Dorsolateral prefrontal cortex (tissue), 120 donors: ENCODE measurements at regions of chr4 and their contacts with region 1.

Region 1: GRCh38 chr4:39044364-39044955 is 12.3 kb upstream of the TMEM156 start:
- DNase-seq: peak; percentile 64 to 90 (median 84)
- H3K4me3 ChIP-seq: peak overlapping the region; percentile 33 to 94 (median 75)
- H3K27ac ChIP-seq: peak overlapping the region; percentile 53 to 98 (median 88)
- H3K27me3 ChIP-seq: no peaks in the 10 kb centered on the region
- CTCF ChIP-seq: peak in 10 of 56 donors; percentile 6 to 26 (median 14)

Region 2: DNA sequence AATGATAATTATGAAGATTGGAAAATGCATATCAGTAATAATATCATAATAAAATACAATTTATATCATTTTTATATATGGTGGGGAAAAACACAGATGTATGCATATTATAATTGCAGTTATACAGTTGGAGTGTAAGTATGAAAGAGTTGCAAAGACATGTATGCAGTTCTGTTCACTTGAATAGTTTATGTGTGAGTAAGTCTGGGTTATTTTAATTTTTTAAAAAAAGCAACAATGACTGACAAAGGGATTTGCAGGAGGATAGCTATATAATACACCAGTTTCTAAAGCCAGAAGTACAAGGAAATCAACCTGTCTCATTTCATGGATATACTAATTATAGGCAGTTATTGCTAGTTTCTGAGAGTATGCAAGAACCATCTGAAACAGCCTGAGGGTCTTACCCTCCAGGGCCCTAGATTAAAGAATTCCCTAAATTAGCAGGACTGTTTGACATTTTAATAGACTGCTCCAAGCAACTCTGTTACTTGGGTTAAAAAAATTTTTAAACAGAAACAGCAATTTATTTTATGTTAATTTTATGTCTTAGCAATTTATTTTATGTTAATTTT is 136.7 kb before region 1 on chr4:
- intact Hi-C with region 1: no loop called
- DNase-seq: no peak
- H3K4me3 ChIP-seq: no peak overlapping the region
- H3K27ac ChIP-seq: no peak overlapping the region
- H3K27me3 ChIP-seq: no peaks in the 10 kb centered on the region
- CTCF ChIP-seq: no peak

Region 3: GRCh38 chr4:38920186-38920585 is 124.3 kb before region 1 on chr4:
- intact Hi-C with region 1: loop called (anchors 5 to 10 kb)
- DNase-seq: no peak
- H3K4me3 ChIP-seq: no peak overlapping the region
- H3K27ac ChIP-seq: peak overlapping the region in 13 of 59 donors; percentile 0 to 90 (median 16)
- H3K27me3 ChIP-seq: no peaks in the 10 kb centered on the region
- CTCF ChIP-seq: no peak

Region 4: GRCh38 chr4:38925492-38926413 is 118.7 kb before region 1 on chr4:
- intact Hi-C with region 1: loop called (anchors 5 to 10 kb)
- DNase-seq: peak in 9 of 10 donors; percentile 43 to 72 (median 58)
- H3K4me3 ChIP-seq: peak overlapping the region in 2 of 59 donors; percentile 4 to 20
- H3K27ac ChIP-seq: peak overlapping the region; percentile 59 to 98 (median 91)
- H3K27me3 ChIP-seq: no peaks in the 10 kb centered on the region
- CTCF ChIP-seq: peak in 1 of 56 donors; percentile 6

Region 5: GRCh38 chr4:39061457-39061856 is 17.0 kb after region 1 on chr4:
- intact Hi-C with region 1: loop called in 1 of 2 experiments (anchors 2 kb)
- DNase-seq: no peak
- H3K4me3 ChIP-seq: peak overlapping the region in 33 of 59 donors; percentile 8 to 65 (median 49)
- H3K27ac ChIP-seq: peak overlapping the region in 11 of 59 donors; percentile 12 to 76 (median 45)
- H3K27me3 ChIP-seq: no peaks in the 10 kb centered on the region
- CTCF ChIP-seq: peak in 18 of 56 donors; percentile 8 to 52 (median 18)

Region 6: GRCh38 chr4:39134683-39135319 is 90.3 kb after region 1 on chr4:
- intact Hi-C with region 1: loop called (anchors 5 to 10 kb)
- DNase-seq: no peak
- H3K4me3 ChIP-seq: peak overlapping the region in 30 of 59 donors; percentile 1 to 53 (median 20)
- H3K27ac ChIP-seq: peak overlapping the region in 37 of 59 donors; percentile 2 to 77 (median 38)
- H3K27me3 ChIP-seq: no peaks in the 10 kb centered on the region
- CTCF ChIP-seq: no peak

Region 7: DNA sequence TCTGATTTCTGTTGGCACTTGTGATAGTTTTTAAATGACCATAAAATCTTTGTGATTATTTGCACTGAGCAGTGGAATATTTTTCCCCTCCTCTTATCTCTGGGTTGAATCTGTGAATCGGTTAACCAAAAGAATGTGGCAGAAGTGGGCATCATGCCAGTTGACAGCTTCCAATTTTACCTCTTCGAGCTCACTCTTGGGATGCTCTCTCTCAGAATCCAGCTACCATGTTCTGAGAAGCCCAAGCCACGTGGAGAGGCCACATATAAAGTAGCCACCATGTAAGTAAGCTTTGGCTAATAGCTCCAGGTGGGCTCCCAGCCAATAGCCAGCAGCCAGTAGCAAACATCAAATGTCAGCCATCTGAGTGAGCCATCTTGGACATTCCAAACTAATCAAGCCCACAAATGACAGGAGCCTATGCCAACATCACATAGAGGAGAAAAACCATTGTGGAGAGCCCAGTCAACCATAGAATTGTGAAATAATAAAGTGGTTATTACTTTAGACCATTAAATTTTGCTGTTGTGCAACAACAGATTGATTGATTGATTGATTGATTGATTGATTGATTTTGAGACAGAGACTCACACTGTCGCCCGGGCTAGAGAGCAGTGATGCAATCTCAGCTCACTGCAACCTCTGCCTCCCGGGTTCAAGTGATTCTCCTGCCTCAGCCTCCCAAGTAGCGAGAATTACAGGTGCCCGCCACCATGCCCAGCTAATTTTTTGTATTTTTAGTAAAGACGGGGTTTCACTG is 125.1 kb after region 1 on chr4:
- intact Hi-C with region 1: no loop called
- DNase-seq: no peak
- H3K4me3 ChIP-seq: no peak overlapping the region
- H3K27ac ChIP-seq: no peak overlapping the region
- H3K27me3 ChIP-seq: no peaks in the 10 kb centered on the region
- CTCF ChIP-seq: no peak

Region 8: DNA sequence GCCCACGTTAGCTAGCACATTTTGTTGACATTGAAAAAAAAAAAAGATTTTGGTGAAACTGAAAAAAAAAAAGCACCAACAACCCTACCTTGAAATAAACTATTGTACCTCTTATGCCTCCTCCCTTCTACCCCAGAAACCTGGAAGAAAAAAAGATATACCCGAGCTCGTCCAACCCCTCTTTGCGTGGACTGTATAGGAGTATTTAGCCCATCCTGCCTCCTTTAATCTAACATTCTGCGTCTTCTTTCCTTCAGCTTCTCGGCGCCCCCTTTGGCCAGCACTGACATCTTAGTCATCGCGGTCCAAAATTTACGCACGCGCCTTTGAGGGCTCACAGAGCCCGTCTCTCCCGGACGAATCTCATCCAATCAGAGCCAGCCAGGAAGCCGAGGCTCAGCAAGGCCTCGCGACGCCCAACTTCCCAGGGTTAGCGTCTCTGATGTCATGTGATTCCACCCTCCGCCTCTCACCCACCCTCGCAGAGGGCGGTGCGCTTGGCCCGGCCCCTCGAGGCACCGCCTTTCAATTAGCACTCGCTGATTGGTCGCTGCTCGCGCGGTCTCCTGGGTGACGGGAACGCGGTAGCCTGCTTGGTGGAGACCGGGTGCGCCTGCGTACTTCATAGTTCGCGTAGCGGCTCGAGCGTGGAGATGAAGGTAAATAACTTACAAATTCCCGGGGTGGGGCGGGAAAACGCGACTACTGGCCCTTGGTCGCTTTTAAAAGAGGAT is 137.6 kb after region 1 on chr4 and contains the start of gene WDR19:
- intact Hi-C with region 1: loop called in 1 of 2 experiments (anchors 5 kb)
- DNase-seq: peak; percentile 98 to 100 (median 99)
- H3K4me3 ChIP-seq: peak within 1 kb of the TSS; percentile 55 to 93 (median 82)
- H3K27ac ChIP-seq: peak within 1 kb of the TSS; percentile 40 to 92 (median 83)
- H3K27me3 ChIP-seq: no peaks in the 10 kb centered on the region
- CTCF ChIP-seq: peak in 55 of 56 donors; percentile 20 to 78 (median 59)
- total RNA-seq, gene WDR19: 39.7 to 107 (median 68.1) TPM